PC-3 (cell line): ENCODE measurements at regions of chrX and their contacts with region 1.

Region 1: DNA sequence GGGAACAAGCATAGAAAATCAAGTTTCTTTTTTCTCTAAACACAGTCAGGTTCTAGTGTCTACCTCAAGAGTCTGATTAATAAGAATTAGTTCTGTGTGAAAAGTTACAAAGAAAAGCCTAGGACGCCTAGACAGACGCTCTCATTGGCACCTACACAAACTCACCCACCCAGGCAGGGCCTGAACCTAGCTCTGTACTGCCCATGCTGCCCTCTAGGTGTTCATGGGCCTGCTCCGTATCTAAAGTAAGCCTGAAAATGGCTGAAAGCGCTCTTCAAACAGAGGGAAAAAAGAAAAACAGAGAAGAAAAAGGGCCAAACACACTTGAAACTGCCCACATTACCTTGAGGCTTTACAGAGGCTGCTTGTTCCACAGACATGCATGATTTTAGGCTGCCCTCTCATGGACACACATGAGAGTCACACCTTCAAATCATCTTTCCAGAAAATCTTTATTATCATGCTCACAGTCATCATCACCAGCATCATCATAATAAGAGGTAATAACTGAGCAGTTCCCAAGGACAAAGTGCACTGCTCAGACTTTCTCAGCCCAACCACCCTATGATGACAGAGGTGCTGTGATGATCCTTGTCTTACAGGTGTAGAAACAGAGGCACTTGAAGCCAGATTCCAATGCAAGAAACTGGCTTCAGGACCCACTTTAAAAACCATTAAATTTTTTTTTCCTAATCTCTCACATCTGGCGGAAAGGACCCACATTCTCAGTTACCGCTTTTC is 49.6 kb downstream of the MAP7D2 start:
- DNase-seq: peak; percentile 73
- ATAC-seq: peak; percentile 77
- H3K4me3 ChIP-seq: peak overlapping the region; percentile 33; the same call in 1 of the 2 replicates
- H3K27ac ChIP-seq: no peak overlapping the region
- H3K4me1 ChIP-seq: peaks cover 13% of the 10 kb centered on the region
- H3K27me3 ChIP-seq: no peaks in the 10 kb centered on the region
- CTCF ChIP-seq: peak; percentile 85

Region 2: DNA sequence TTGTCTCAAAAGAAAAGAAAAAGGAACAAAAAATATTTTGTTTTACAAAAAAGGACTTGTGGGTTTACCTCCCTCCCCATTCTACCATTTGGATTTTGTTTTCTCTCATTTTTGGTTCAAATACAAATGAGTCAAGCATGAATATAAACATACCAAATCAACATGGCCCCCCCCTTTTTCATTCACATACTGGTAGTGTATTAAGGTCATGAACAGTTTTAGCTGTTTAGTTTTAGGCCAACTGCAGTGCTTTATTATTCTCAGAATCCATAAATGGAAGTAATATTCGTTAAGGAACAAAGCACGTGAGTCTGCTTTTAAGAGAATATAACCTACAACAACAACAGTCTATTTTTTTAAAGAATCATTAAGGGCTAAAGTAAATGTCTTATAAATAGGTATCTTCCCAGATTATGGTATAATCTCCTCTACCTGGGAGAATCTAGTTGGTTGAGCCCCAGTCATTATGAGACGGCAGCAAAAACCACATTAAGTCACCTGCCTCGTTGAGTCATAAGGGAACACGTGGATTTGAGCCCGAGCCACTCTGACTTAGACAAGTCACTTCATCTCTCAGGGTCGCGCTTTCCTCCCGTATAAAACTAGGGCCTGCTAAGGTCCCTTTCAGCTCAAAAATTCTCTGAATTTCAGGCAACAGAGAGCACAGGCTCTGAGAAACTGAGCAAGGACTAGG is 103.0 kb before region 1 on chrX:
- CTCF ChIA-PET with region 1: no interaction called
- POLR2A ChIA-PET with region 1: no interaction called
- intact Hi-C with region 1: no loop called
- DNase-seq: peak; percentile 62
- ATAC-seq: no peak; the same call in 1 of the 2 replicates
- H3K4me3 ChIP-seq: no peak overlapping the region
- H3K27ac ChIP-seq: peak overlapping the region; percentile 22; the same call in 1 of the 2 replicates
- H3K4me1 ChIP-seq: peaks cover 8% of the 10 kb centered on the region; the same call in 1 of the 2 replicates
- H3K27me3 ChIP-seq: no peaks in the 10 kb centered on the region
- CTCF ChIP-seq: no peak

Region 3: GRCh38 chrX:20141281-20142220 is 74.4 kb after region 1 on chrX and contains the start of gene EIF1AX:
- CTCF ChIA-PET with region 1: interaction called, 10 read pairs
- POLR2A ChIA-PET with region 1: no interaction called
- intact Hi-C with region 1: no loop called
- DNase-seq: peak; percentile 97
- ATAC-seq: peak; percentile 96
- H3K4me3 ChIP-seq: peak within 1 kb of the TSS; percentile 100
- H3K27ac ChIP-seq: peak within 1 kb of the TSS; percentile 30; the same call in 1 of the 2 replicates
- H3K4me1 ChIP-seq: peaks cover 34% of the 10 kb centered on the region
- H3K27me3 ChIP-seq: no peaks in the 10 kb centered on the region
- CTCF ChIP-seq: no peak
- total RNA-seq, gene EIF1AX: 47.5 and 51.1 TPM in 2 replicates